GM12878 (cell line): ENCODE measurements at regions of chr18 and their contacts with region 1.

Region 1: GRCh38 chr18:53909668-53910067 is 314.8 kb downstream of the MBD2 start:
- DNase-seq: no peak
- ATAC-seq: peak; percentile 91
- H3K4me3 ChIP-seq: no peak overlapping the region
- H3K27ac ChIP-seq: no peak overlapping the region
- H3K4me1 ChIP-seq: no peaks in the 10 kb centered on the region
- H3K27me3 ChIP-seq: 0 out of 4 replicates have a peak, but pooled peaks cover 0 to 2% of the 10 kb centered on the region in 2 experiments
- CTCF ChIP-seq: peak; percentile 57 to 64 (median 60)
- EP300 ChIP-seq: no peak
- POLR2A ChIP-seq: no peak
- RAD21 ChIP-seq: peak; percentile 64

Region 2: DNA sequence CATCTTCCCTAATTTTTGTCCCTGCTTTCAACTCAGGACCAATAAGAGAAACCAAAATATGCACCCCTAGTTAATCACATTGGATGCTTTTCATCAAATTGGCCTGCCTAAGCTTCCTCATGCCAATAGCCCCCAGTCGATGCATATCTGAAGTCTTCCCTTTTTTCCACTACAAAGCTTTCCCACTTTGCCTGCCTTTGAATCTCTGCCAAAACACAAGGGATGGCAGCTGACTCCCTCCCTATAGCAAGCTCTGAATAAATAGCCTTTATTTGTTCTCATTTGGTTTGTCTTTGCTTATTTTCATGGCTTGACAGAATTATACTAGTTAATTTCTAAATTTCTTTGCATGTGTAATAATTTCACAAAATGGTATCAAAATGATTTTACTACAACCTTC is 306.4 kb before region 1 on chr18:
- CTCF ChIA-PET with region 1: no interaction called
- POLR2A ChIA-PET with region 1: no interaction called
- RAD21 ChIA-PET with region 1: no interaction called
- SMC1A ChIA-PET with region 1: no interaction called
- in situ Hi-C with region 1: no loop called
- intact Hi-C with region 1: no loop called
- DNase-seq: no peak
- ATAC-seq: no peak
- H3K4me3 ChIP-seq: no peak overlapping the region
- H3K27ac ChIP-seq: no peak overlapping the region
- H3K4me1 ChIP-seq: no peaks in the 10 kb centered on the region
- H3K27me3 ChIP-seq: peaks cover 0 to 2% of the 10 kb centered on the region in 2 experiments; a peak in 1 of 4 replicates
- CTCF ChIP-seq: no peak
- EP300 ChIP-seq: no peak
- POLR2A ChIP-seq: no peak
- RAD21 ChIP-seq: no peak

Region 3: DNA sequence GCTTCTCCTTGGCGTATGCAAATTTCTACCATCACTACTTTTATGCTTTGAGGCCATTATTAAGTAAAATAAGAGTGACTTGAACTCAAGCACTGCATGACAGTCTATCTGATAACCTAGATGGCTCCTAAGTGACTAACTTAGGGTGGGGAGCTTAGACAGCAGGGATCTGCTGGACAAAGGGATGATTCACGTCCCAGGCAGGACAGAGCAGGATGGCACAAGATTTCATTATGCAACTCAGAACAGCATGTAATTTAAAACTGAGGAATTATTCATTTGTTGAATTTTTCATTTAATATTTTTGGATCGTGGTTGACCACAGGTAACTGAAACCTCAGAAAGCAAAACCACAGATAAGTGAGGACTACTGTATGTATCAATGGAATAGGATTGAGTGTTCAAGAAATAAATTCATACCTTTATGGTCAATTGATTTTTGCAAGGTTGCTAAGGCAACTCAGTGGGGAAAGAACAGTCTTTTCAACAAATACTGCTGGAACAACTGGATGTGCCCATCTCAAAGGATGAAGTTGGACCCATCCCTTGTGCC is 199.5 kb after region 1 on chr18:
- CTCF ChIA-PET with region 1: interaction called, 11 read pairs
- POLR2A ChIA-PET with region 1: no interaction called
- RAD21 ChIA-PET with region 1: no interaction called
- SMC1A ChIA-PET with region 1: no interaction called
- in situ Hi-C with region 1: no loop called
- intact Hi-C with region 1: no loop called
- DNase-seq: no peak
- ATAC-seq: no peak
- H3K4me3 ChIP-seq: no peak overlapping the region
- H3K27ac ChIP-seq: no peak overlapping the region
- H3K4me1 ChIP-seq: no peaks in the 10 kb centered on the region
- H3K27me3 ChIP-seq: no peaks in the 10 kb centered on the region
- CTCF ChIP-seq: no peak
- EP300 ChIP-seq: no peak
- POLR2A ChIP-seq: no peak
- RAD21 ChIP-seq: no peak

Region 4: GRCh38 chr18:54127759-54128378 is 218.2 kb after region 1 on chr18:
- CTCF ChIA-PET with region 1: interaction called, 16 read pairs
- POLR2A ChIA-PET with region 1: no interaction called
- RAD21 ChIA-PET with region 1: interaction called, 4 read pairs
- SMC1A ChIA-PET with region 1: interaction called, 8 read pairs
- in situ Hi-C with region 1: no loop called
- intact Hi-C with region 1: no loop called
- DNase-seq: no peak
- ATAC-seq: peak; percentile 90
- H3K4me3 ChIP-seq: no peak overlapping the region
- H3K27ac ChIP-seq: no peak overlapping the region
- H3K4me1 ChIP-seq: peaks cover 3% of the 10 kb centered on the region
- H3K27me3 ChIP-seq: no peaks in the 10 kb centered on the region
- CTCF ChIP-seq: peak; percentile 54 to 65 (median 57); a peak in 5 of 6 replicates
- EP300 ChIP-seq: no peak
- POLR2A ChIP-seq: no peak
- RAD21 ChIP-seq: peak; percentile 78